ENCODE measurements at regions of chr13 and their contacts with region 1.

Region 1: DNA sequence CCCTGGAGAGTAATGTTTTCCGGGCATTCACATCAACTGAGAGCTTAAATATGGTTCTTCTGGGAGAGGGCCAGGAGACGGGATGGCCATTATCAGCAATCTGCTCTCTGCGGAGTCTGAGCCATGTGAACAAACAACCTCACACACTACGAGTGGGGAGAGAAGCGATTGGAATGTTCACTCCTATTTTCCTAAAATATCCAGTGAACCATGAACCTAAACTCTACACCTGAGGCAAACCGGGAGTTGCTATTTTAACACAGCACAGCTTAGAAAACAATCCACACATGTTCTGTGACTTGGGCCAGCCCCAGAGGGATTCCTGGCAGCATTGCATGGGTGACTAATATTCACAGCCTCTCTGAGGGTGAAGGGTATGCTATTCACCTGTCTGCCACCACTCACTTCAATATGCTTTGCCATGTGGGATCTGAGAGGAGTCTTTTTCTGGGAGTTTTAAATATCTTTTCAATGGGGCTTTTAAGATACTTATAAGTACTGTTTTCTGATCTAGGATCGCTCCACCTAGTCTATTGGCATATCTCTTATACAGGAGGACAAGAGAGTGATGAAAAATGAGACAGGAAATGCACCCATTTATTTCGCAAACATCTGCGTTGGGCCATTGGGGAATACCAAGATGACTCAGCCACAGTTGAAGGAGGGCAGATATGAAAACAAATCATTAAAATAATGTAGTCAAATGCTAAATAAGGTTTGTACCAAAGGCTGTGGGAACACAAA is 72.6 kb upstream of the SERP2 start:
- DNase-seq: peak; percentile 39 to 78
- ATAC-seq: peak; percentile 94 to 97 (median 95)
- H3K4me3 ChIP-seq: peak overlapping the region; percentile 28
- H3K27ac ChIP-seq: peak overlapping the region; percentile 90
- H3K4me1 ChIP-seq: peaks cover 69% of the 10 kb centered on the region
- H3K27me3 ChIP-seq: no peaks in the 10 kb centered on the region
- CTCF ChIP-seq: peak; percentile 3

Region 2: GRCh38 chr13:44013758-44014291 is 287.2 kb before region 1 on chr13:
- intact Hi-C with region 1: no loop called
- DNase-seq: no peak
- ATAC-seq: peak; percentile 79 to 95 (median 86)
- H3K4me3 ChIP-seq: peak overlapping the region; percentile 33
- H3K27ac ChIP-seq: peak overlapping the region; percentile 42
- H3K4me1 ChIP-seq: peaks cover 19% of the 10 kb centered on the region
- H3K27me3 ChIP-seq: no peaks in the 10 kb centered on the region
- CTCF ChIP-seq: no peak

Region 3: GRCh38 chr13:44231786-44232516 is 69.1 kb before region 1 on chr13:
- intact Hi-C with region 1: loop called in 1 of 2 experiments (anchors 2 kb)
- DNase-seq: peak; percentile 72 to 76
- ATAC-seq: peak; percentile 86 to 94 (median 90)
- H3K4me3 ChIP-seq: peak overlapping the region; percentile 29
- H3K27ac ChIP-seq: peak overlapping the region; percentile 91
- H3K4me1 ChIP-seq: peaks cover 44% of the 10 kb centered on the region
- H3K27me3 ChIP-seq: no peaks in the 10 kb centered on the region
- CTCF ChIP-seq: peak; percentile 18

Region 4: GRCh38 chr13:44259045-44260027 is 41.7 kb before region 1 on chr13:
- intact Hi-C with region 1: loop called in 1 of 2 experiments (anchors 5 kb)
- DNase-seq: peak; percentile 41 to 62
- ATAC-seq: peak; percentile 61 to 89 (median 84)
- H3K4me3 ChIP-seq: no peak overlapping the region
- H3K27ac ChIP-seq: peak overlapping the region; percentile 66
- H3K4me1 ChIP-seq: peaks cover 15% of the 10 kb centered on the region
- H3K27me3 ChIP-seq: no peaks in the 10 kb centered on the region
- CTCF ChIP-seq: no peak

Region 5: DNA sequence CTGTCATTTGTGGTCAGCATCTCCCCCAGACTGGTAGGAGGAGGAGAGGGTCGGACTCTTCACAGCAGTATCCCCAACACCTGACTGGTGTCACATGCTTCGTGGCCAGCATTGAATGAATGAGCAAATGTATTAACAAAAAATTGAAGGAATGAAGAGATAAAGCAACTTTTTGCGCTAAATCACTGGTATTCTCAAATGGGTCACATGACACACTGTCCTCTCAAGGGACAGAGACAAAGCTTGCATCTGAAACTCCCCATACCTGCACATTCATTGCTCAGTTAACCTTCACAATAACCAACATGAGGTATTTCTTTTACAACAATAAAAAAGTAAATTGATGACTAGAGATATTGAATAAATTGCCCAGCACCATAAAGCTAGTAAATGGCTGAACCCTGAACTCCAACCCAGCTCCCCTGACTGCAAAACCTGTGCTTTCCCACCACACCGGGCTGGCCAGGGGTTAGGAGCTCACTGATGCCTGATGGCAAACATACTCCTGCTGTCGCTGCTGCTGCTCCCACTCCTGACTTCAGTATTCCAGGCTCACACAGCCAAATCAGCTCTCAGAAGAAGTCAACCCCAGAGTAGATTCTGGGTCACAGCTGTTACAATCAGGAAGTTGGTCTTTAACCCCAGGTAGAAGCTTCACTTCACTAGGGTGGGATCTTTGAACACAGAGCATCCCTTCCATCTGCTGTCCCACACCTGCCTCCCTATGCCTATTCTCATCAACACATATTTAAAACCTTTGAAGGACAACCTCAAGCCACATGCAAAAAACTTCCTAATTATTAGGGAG is 27.2 kb before region 1 on chr13:
- intact Hi-C with region 1: loop called in 1 of 2 experiments (anchors 2 kb)
- DNase-seq: no peak
- ATAC-seq: no peak
- H3K4me3 ChIP-seq: peak overlapping the region; percentile 19
- H3K27ac ChIP-seq: peak overlapping the region; percentile 71
- H3K4me1 ChIP-seq: peaks cover 38% of the 10 kb centered on the region
- H3K27me3 ChIP-seq: no peaks in the 10 kb centered on the region
- CTCF ChIP-seq: no peak

Region 6: DNA sequence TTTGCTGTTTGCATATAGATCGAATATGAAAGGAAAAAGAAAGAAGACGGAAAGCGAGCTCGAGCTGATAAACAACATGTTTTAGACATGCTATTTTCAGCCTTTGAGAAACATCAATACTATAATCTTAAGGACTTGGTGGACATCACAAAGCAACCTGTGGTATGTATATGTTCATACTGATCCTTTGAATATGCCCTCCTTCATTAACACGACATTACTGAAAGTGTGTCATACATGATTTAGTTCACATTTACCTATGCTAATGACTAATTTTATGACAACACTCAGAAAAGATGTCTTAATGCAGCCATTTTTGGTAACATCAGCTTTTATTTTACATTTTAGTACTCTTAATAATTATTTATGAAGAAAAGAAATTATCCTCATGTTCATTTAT is 966.1 kb after region 1 on chr13:
- intact Hi-C with region 1: no loop called
- DNase-seq: no peak
- ATAC-seq: no peak
- H3K4me3 ChIP-seq: no peak overlapping the region
- H3K27ac ChIP-seq: no peak overlapping the region
- H3K4me1 ChIP-seq: no peaks in the 10 kb centered on the region
- H3K27me3 ChIP-seq: no peaks in the 10 kb centered on the region
- CTCF ChIP-seq: no peak